GM12878 (cell line): ENCODE measurements at regions of chr5 and their contacts with region 1.

Region 1: GRCh38 chr5:56037531-56038010 is 42.8 kb upstream of the IL6ST start:
- DNase-seq: no peak
- ATAC-seq: peak; percentile 89
- H3K4me3 ChIP-seq: no peak overlapping the region
- H3K27ac ChIP-seq: no peak overlapping the region
- H3K4me1 ChIP-seq: no peaks in the 10 kb centered on the region
- H3K27me3 ChIP-seq: no peaks in the 10 kb centered on the region
- CTCF ChIP-seq: no peak
- EP300 ChIP-seq: no peak
- POLR2A ChIP-seq: no peak
- RAD21 ChIP-seq: no peak

Region 2: GRCh38 chr5:56050551-56051255 is 13.1 kb after region 1 on chr5:
- CTCF ChIA-PET with region 1: interaction called, 5 read pairs
- POLR2A ChIA-PET with region 1: no interaction called
- RAD21 ChIA-PET with region 1: interaction called, 9 read pairs
- SMC1A ChIA-PET with region 1: interaction called, 12 read pairs
- in situ Hi-C with region 1: no loop called
- intact Hi-C with region 1: no loop called
- DNase-seq: no peak
- ATAC-seq: peak; percentile 66
- H3K4me3 ChIP-seq: no peak overlapping the region
- H3K27ac ChIP-seq: no peak overlapping the region
- H3K4me1 ChIP-seq: peaks cover 6% of the 10 kb centered on the region; the same call in 1 of the 2 replicates
- H3K27me3 ChIP-seq: no peaks in the 10 kb centered on the region
- CTCF ChIP-seq: no peak
- EP300 ChIP-seq: no peak
- POLR2A ChIP-seq: no peak
- RAD21 ChIP-seq: no peak

Region 3: DNA sequence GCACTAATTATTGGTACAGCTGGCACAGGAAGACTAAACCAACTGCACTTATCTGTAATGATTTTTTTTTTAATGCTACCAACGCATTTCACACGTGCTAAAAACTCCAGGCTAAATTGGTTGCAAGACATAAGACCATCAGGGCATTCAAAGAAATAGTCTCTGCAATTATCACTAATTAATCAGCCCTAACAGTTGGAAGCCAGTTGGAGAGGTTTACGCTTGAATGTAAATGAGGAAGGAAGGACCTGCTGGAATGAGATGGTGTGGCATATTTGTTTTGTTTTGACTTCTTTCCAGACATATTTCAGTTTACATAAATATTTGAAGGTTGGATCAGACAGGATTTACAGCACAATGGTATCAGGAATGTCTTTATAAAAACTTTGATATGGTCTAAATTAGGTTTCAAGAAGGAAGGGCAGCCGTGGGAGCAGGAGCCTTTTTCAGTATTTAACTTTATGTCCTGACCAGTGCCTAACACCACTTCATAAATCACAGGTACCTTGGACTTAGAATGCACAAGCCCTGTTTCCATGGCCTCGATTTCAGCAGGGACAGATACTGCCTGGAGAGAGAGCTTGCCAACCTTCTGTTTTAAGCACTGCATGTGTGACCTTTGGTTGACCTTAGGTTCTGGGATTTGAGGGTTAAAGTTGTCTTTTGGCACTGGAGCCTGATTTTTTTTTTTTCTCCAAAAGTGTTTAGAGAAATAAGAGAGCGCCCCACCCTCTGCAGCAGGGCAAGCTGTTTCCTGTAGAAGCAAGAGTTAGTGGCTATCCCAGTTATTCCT is 578.0 kb after region 1 on chr5:
- CTCF ChIA-PET with region 1: no interaction called
- POLR2A ChIA-PET with region 1: no interaction called
- RAD21 ChIA-PET with region 1: no interaction called
- SMC1A ChIA-PET with region 1: no interaction called
- in situ Hi-C with region 1: no loop called
- intact Hi-C with region 1: no loop called
- DNase-seq: no peak
- ATAC-seq: no peak
- H3K4me3 ChIP-seq: no peak overlapping the region
- H3K27ac ChIP-seq: no peak overlapping the region
- H3K4me1 ChIP-seq: no peaks in the 10 kb centered on the region; the same call in 1 of the 2 replicates
- H3K27me3 ChIP-seq: no peaks in the 10 kb centered on the region
- CTCF ChIP-seq: no peak
- EP300 ChIP-seq: no peak
- POLR2A ChIP-seq: no peak
- RAD21 ChIP-seq: no peak